Prostate gland (tissue), 2 donors: ENCODE measurements at regions of chr17 and their contacts with region 1.

Region 1: GRCh38 chr17:49677933-49678847 is at the start of gene SPOP:
- DNase-seq: peak; percentile 99
- H3K4me3 ChIP-seq: peak within 1 kb of the TSS; percentile 59 to 77
- H3K27ac ChIP-seq: peak within 1 kb of the TSS; percentile 96 to 99
- H3K4me1 ChIP-seq: peaks cover 11% of the 10 kb centered on the region
- H3K27me3 ChIP-seq: no peaks in the 10 kb centered on the region
- CTCF ChIP-seq: no peak
- POLR2A ChIP-seq: peak; percentile 72
- total RNA-seq, gene SPOP: 80.8 to 93.0 TPM

Region 2: DNA sequence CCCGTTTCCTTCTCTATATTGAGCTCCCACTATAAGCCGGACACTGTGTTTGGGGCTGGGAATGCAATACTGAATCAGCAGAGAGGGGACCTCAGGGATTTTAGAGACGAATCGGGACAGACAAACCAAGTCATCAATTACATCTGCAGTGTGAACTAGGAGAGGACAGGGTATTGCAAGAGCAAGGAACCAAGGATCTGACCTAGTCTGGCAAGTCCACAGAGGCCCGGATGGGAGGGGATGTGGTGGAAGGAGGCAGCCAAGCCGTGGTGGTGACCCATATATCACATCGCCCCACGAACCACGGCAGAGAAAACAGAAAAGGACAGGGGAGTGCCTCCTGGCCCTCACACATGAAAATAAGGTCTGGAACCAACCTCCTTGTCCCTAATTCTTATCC is 130.6 kb before region 1 on chr17:
- intact Hi-C with region 1: no loop called
- DNase-seq: no peak
- H3K4me3 ChIP-seq: no peak overlapping the region
- H3K27ac ChIP-seq: peak overlapping the region in 1 of 2 donors; percentile 31
- H3K4me1 ChIP-seq: peaks cover 6% of the 10 kb centered on the region
- H3K27me3 ChIP-seq: no peaks in the 10 kb centered on the region
- CTCF ChIP-seq: no peak
- POLR2A ChIP-seq: no peak

Region 3: GRCh38 chr17:49640556-49640955 is 37.6 kb before region 1 on chr17:
- intact Hi-C with region 1: loop called (anchors 5 kb)
- DNase-seq: no peak
- H3K4me3 ChIP-seq: no peak overlapping the region
- H3K27ac ChIP-seq: peak overlapping the region in 1 of 2 donors; percentile 42
- H3K4me1 ChIP-seq: no peaks in the 10 kb centered on the region
- H3K27me3 ChIP-seq: no peaks in the 10 kb centered on the region
- CTCF ChIP-seq: no peak
- POLR2A ChIP-seq: no peak

Region 4: GRCh38 chr17:49694847-49695683 is 16.9 kb after region 1 on chr17:
- intact Hi-C with region 1: loop called (anchors 2 kb)
- DNase-seq: peak; percentile 41
- H3K4me3 ChIP-seq: no peak overlapping the region
- H3K27ac ChIP-seq: peak overlapping the region in 1 of 2 donors; percentile 41
- H3K4me1 ChIP-seq: no peaks in the 10 kb centered on the region
- H3K27me3 ChIP-seq: no peaks in the 10 kb centered on the region
- CTCF ChIP-seq: peak; percentile 90 to 96 (median 94)
- POLR2A ChIP-seq: no peak